Vagina (tissue), 2 donors: ENCODE measurements at regions of chr11 and their contacts with region 1.

Region 1: DNA sequence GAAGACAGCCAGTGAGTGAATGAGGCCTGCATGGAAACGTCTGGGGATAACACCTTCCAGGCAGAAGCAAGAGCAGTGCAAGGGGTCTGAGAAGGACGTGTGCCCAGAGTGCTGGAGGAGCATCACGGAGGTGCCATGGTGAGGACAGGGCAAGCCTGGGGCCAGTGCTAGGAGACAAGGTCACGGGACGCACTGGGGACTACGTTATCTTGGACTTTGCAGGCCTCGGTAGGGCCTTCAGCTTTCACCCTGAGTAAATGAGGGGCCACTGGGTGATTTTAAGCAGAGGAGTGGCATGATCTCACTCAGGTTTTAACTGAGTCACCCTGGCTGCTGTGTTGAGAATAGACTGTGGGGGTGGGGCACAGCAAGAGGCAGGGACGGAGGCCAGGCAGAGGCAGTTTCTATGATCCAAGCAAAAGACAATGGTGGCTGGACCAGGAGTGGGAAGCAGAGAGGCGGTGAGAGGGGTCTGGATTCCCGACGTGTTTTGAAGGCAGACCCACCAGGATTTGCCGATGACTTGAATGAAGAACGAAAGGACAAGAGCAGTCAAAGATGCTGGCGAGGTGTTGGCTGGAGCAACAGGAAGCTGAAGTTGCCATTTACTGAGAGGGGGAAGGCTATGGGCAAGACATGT is 102.7 kb upstream of the PARVA start:
- DNase-seq: no peak
- H3K4me3 ChIP-seq: no peak overlapping the region
- H3K27ac ChIP-seq: no peak overlapping the region
- H3K4me1 ChIP-seq: no peaks in the 10 kb centered on the region
- H3K27me3 ChIP-seq: no peaks in the 10 kb centered on the region
- CTCF ChIP-seq: no peak
- POLR2A ChIP-seq: no peak

Region 2: GRCh38 chr11:11806586-11806985 is 468.1 kb before region 1 on chr11:
- intact Hi-C with region 1: loop called (anchors 10 kb)
- DNase-seq: no peak
- H3K4me3 ChIP-seq: no peak overlapping the region
- H3K27ac ChIP-seq: no peak overlapping the region
- H3K4me1 ChIP-seq: no peaks in the 10 kb centered on the region
- H3K27me3 ChIP-seq: no peaks in the 10 kb centered on the region
- CTCF ChIP-seq: no peak
- POLR2A ChIP-seq: no peak